Gastrocnemius medialis (tissue), 4 donors: ENCODE measurements at regions of chr11 and their contacts with region 1.

Region 1: DNA sequence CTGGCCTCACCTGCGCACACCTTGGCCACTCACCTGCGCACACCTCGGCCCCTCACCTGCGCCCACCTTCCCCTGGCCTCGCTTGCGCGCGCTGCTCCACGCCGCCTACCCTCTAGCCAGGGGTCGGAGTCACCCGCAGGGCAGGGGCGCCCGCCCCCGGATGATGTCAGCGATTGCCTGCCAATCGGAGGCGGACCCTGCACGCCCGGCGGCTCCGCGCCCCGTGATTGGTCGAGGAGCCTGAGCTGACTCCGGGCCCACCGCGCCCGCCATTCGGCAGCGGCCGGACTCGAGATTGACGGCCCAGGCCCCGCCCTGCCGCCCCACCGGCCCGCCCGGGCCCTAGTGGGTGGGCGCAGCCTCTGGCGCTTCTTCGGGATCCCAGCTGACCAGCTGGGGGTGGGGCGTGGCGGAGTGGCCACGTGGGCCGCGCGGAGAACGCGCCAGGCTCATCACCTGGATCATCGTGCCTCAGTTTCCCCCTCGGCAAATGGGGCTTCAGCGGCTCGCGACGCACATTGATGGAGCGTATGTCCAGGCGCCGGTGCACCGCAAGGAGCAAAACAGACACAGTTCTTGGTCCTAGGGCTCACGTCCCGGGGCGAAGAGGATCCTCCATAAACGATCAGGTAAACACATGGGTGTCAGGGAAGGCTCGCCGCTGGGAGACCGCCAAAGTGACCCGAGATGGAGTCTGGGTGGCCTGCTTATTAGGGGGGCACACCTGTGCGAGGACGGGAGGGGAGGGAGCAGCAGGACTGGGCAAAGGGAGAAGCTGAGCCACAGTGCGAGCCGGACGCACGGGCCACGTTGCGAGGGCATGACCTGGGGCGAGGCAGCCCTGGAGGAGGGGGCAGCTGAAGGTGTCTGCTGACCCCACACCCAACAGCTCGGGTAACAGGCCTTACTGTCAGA is at the start of gene DHCR7:
- DNase-seq: peak; percentile 87 to 92
- ATAC-seq: peak; percentile 59 to 71
- H3K4me3 ChIP-seq: peak within 1 kb of the TSS; percentile 68 to 92 (median 74)
- H3K27ac ChIP-seq: peak within 1 kb of the TSS; percentile 75 to 87 (median 84)
- H3K4me1 ChIP-seq: peaks cover 18 to 24% of the 10 kb centered on the region in 2 donors
- H3K27me3 ChIP-seq: no peaks in the 10 kb centered on the region
- CTCF ChIP-seq: peak in 1 of 5 experiments; percentile 21
- POLR2A ChIP-seq: peak; percentile 44 to 52
- total RNA-seq, gene DHCR7: 2.5 to 7.3 (median 5.9) TPM

Region 2: GRCh38 chr11:71329165-71329510 is 119.4 kb before region 1 on chr11:
- in situ Hi-C with region 1: no loop called
- intact Hi-C with region 1: no loop called
- DNase-seq: no peak
- ATAC-seq: no peak
- H3K4me3 ChIP-seq: no peak overlapping the region
- H3K27ac ChIP-seq: no peak overlapping the region
- H3K4me1 ChIP-seq: no peaks in the 10 kb centered on the region
- H3K27me3 ChIP-seq: no peaks in the 10 kb centered on the region
- CTCF ChIP-seq: no peak
- POLR2A ChIP-seq: no peak

Region 3: GRCh38 chr11:71499125-71499524 is 50.6 kb after region 1 on chr11:
- in situ Hi-C with region 1: no loop called
- intact Hi-C with region 1: loop called (anchors 5 kb)
- DNase-seq: peak; percentile 9 to 34
- ATAC-seq: peak; percentile 81 to 90
- H3K4me3 ChIP-seq: peak overlapping the region in 3 of 4 donors; percentile 3 to 17 (median 5)
- H3K27ac ChIP-seq: peak overlapping the region; percentile 58 to 81 (median 75)
- H3K4me1 ChIP-seq: peaks cover 0 to 14% of the 10 kb centered on the region in 2 donors
- H3K27me3 ChIP-seq: no peaks in the 10 kb centered on the region
- CTCF ChIP-seq: no peak
- POLR2A ChIP-seq: no peak

Region 4: GRCh38 chr11:71787098-71787823 is 338.7 kb after region 1 on chr11:
- in situ Hi-C with region 1: no loop called
- intact Hi-C with region 1: loop called (anchors 5 kb)
- DNase-seq: peak; percentile 21 to 91
- ATAC-seq: peak; percentile 99 to 100
- H3K4me3 ChIP-seq: peak overlapping the region; percentile 63 to 85 (median 78)
- H3K27ac ChIP-seq: peak overlapping the region; percentile 73 to 92 (median 88)
- H3K4me1 ChIP-seq: peaks cover 6% of the 10 kb centered on the region in 2 donors
- H3K27me3 ChIP-seq: no peaks in the 10 kb centered on the region
- CTCF ChIP-seq: no peak
- POLR2A ChIP-seq: peak; percentile 62 to 65